Activated CD4-positive, alpha-beta memory T cell treated with anti-CD3 and anti-CD28 coated beads, Interleukin-2, amount 10 ng/mL, durations not matched to agents 7 days and 5 days (primary cell): ENCODE measurements at regions of chr15 and their contacts with region 1.

Region 1: GRCh38 chr15:48330855-48331795 is at the start of gene DUT:
- DNase-seq: peak; percentile 86
- H3K4me3 Mint-ChIP-seq: peak within 1 kb of the TSS; percentile 92
- H3K27ac Mint-ChIP-seq: peak within 1 kb of the TSS; percentile 96
- H3K4me1 Mint-ChIP-seq: peaks cover 45% of the 10 kb centered on the region
- H3K27me3 Mint-ChIP-seq: no peaks in the 10 kb centered on the region
- total RNA-seq, gene DUT: 267 to 282 TPM

Region 2: DNA sequence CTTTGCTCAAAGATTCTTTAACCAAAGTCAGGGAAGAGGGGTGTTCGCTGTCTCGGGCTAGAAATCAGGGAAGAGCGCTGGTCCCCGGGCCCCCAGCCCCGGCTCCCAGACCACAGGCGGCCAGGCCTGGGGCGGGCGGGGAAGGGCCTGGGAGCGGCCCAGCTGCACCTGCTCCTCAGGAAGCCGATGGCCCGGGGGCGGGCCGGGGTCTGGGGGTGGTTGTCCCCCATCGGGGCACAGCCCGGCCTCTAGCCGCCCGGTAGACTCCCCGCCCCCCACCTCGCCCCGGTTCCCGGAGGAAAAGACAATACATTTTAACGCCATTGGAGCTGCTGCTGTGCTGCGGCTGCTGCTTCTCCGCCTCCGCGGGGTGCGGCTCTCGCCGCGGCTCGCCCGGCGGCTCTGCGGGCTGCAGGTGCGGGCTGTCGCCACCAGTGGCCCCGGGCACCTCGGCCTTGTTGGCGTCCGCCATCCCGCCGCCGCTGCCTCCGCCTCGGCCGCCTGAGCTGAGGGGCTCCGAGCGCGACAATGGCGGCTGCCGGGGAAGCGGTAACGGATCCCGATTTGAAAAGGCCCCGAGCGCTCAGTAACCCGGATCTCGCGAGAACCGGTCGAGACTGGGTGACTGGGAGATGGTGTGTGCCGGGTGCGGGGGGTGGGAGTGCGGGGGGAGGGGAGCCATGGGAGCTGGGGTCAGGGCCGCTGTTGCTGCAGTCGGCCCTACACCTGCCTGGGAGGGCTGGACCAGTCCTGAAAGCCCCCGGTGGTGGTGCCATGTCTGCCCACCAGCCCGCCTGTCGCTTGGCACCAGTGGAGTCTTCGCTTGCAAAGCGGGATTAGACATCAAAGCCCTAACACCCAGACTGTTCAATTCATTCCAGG is 153.1 kb before region 1 on chr15 and contains the start of gene MYEF2:
- CTCF ChIA-PET with region 1: no interaction called
- POLR2A ChIA-PET with region 1: interaction called, 20 read pairs
- DNase-seq: peak; percentile 76
- H3K4me3 Mint-ChIP-seq: peak within 1 kb of the TSS; percentile 76
- H3K27ac Mint-ChIP-seq: peak within 1 kb of the TSS; percentile 71
- H3K4me1 Mint-ChIP-seq: peaks cover 19% of the 10 kb centered on the region
- H3K27me3 Mint-ChIP-seq: peaks cover 17% of the 10 kb centered on the region
- total RNA-seq, gene MYEF2: 26.4 to 27.1 TPM

Region 3: GRCh38 chr15:48352474-48353072 is 21.4 kb after region 1 on chr15:
- CTCF ChIA-PET with region 1: interaction called, 35 read pairs
- POLR2A ChIA-PET with region 1: interaction called, 13 read pairs
- DNase-seq: peak; percentile 61
- H3K4me3 Mint-ChIP-seq: no peak overlapping the region
- H3K27ac Mint-ChIP-seq: no peak overlapping the region
- H3K4me1 Mint-ChIP-seq: peaks cover 1% of the 10 kb centered on the region
- H3K27me3 Mint-ChIP-seq: peaks cover 3% of the 10 kb centered on the region

Region 4: GRCh38 chr15:48395521-48396011 is 64.4 kb after region 1 on chr15:
- CTCF ChIA-PET with region 1: no interaction called
- POLR2A ChIA-PET with region 1: no interaction called
- DNase-seq: no peak
- H3K4me3 Mint-ChIP-seq: no peak overlapping the region
- H3K27ac Mint-ChIP-seq: no peak overlapping the region
- H3K4me1 Mint-ChIP-seq: no peaks in the 10 kb centered on the region
- H3K27me3 Mint-ChIP-seq: peaks cover 2% of the 10 kb centered on the region

Region 5: GRCh38 chr15:48810414-48811317 is 479.5 kb after region 1 on chr15 and contains the start of gene CEP152:
- CTCF ChIA-PET with region 1: no interaction called
- POLR2A ChIA-PET with region 1: interaction called, 34 read pairs
- DNase-seq: peak; percentile 99
- H3K4me3 Mint-ChIP-seq: peak within 1 kb of the TSS; percentile 84
- H3K27ac Mint-ChIP-seq: peak within 1 kb of the TSS; percentile 93
- H3K4me1 Mint-ChIP-seq: peaks cover 41% of the 10 kb centered on the region
- H3K27me3 Mint-ChIP-seq: peaks cover 15% of the 10 kb centered on the region
- total RNA-seq, gene CEP152: 41.5 to 43.1 TPM